ENCODE measurements at regions of chr13 and their contacts with region 1.

Region 1: GRCh38 chr13:23175920-23176319 is 4.9 kb upstream of the SGCG start:
- DNase-seq: no peak
- ATAC-seq: no peak
- H3K4me3 ChIP-seq: no peak overlapping the region
- H3K27ac ChIP-seq: no peak overlapping the region
- H3K4me1 ChIP-seq: peaks cover 11 to 14% of the 10 kb centered on the region in 2 donors
- H3K27me3 ChIP-seq: no peaks in the 10 kb centered on the region
- CTCF ChIP-seq: no peak
- POLR2A ChIP-seq: no peak

Region 2: DNA sequence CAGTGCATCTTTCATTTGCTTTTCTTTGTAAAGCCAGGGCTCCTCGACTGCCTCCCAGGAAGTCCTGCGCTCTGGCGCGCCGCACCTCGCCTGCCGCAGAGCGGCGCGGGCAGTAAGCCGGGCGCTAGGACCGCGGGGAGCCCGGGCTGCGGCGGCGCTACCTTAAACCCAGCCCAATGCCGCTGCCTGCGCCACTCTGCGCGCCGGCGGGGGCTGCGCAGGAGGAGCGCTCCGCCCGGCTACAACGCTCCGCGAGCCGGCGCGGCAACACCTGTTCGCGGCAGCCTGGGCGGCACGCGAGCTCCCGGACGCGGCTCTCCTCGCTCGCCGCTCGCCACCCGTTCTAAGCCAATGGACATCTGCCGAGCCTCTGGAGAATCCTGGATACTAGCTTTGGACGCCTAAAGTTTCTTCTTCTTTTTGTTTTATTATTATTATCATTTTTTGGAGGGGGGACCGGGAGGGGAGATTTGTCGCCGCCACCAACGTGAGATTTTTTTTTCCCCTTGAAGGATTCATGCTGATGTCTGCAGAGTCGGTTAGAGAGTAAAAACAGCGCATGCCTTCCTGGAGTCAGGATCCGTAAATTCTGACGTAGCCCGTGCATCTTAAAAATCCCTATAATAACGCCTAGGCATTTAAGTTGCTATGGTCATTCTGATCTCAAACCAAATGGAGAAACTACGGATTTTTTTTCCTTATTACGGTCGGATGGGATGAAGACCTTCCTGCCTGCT is 1504.9 kb before region 1 on chr13 and contains the start of gene FGF9:
- in situ Hi-C with region 1: no loop called
- intact Hi-C with region 1: loop called (anchors 5 kb)
- DNase-seq: peak; percentile 34 to 59
- ATAC-seq: peak; percentile 63 to 68
- H3K4me3 ChIP-seq: peak within 1 kb of the TSS; percentile 58 to 64 (median 62)
- H3K27ac ChIP-seq: peak within 1 kb of the TSS; percentile 3 to 76 (median 57)
- H3K4me1 ChIP-seq: peaks cover 24 to 36% of the 10 kb centered on the region in 2 donors
- H3K27me3 ChIP-seq: peaks cover 11 to 35% (median 29%) of the 10 kb centered on the region in 3 donors
- CTCF ChIP-seq: peak in 1 of 5 experiments; percentile 20
- POLR2A ChIP-seq: peak; percentile 79 to 90
- total RNA-seq, gene FGF9: 0.16 to 0.38 (median 0.25) TPM in 3 of 4 donors, not detected in the other

Region 3: DNA sequence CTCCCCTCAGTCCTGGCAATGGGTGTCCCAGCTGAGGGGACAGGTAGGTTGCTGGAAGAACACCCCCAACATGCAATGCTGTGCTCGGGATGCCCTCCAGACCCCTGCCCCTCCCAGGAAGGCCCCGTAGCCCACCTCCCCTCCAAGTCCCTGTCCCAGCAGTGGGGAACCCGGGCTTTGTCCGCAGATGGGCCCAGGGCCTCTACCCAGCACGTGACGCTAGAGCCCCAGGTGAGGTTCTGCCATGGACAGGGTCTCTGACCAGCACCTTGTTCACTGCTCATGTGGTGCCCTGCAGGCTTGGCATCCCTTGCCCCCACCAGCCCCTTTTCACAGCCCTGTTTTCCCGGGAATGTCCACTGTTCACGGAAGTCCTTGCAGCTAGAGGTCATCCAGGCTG is 215.1 kb before region 1 on chr13:
- in situ Hi-C with region 1: no loop called
- intact Hi-C with region 1: no loop called
- DNase-seq: no peak
- ATAC-seq: no peak
- H3K4me3 ChIP-seq: no peak overlapping the region
- H3K27ac ChIP-seq: no peak overlapping the region
- H3K4me1 ChIP-seq: no peaks in the 10 kb centered on the region
- H3K27me3 ChIP-seq: no peaks in the 10 kb centered on the region
- CTCF ChIP-seq: no peak
- POLR2A ChIP-seq: no peak

Region 4: DNA sequence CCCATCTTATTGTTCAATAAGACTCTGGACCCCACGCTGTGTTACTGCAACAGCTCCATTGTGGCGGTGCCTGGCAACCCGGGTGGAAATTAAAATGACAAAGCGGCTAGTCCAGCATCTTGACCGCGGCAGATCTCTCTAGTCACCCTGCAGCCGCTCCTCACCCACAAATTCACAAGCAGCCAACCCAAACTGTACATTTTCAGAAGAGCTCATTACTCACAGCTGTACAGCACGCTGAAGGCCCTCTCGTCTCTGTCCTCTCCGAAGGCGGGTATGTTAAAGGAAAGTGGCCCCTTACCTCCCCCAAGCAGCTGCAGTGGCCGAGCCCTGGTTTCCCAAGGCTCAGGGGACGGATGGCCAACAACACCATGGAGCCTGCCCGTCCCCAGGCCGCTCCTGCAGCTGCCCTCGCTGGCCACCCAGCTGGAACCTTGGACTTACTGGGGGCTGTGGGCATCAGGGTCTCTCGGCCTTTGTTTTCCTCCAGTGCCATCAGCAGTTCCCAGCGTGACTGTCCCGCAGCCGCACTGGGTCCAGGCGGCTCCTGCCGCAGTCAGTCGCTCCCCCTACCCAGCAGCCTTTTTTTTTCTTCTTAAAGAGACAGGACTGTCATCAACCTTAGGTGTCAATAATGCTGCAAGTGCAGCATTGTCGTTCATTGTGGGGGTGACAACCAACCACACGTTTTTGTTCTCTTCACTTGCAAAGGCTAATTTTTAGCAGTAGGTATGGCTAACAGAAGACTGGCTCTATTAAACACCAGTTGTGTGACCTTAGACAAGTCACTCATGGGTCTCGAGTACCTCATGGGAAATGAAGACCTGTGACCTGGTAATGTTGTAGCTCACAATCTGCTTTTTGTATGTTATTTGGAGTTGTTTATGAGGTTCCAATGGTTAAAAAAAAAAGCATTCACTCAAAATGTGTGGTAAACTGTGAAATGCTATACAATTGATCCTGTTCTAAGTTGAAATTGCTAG is 257.5 kb after region 1 on chr13 and contains the start of gene SACS:
- in situ Hi-C with region 1: loop called in 1 of 4 experiments (anchors 25 kb)
- intact Hi-C with region 1: no loop called
- DNase-seq: peak; percentile 28 to 48
- ATAC-seq: peak; percentile 71 to 72
- H3K4me3 ChIP-seq: peak within 1 kb of the TSS; percentile 67 to 92 (median 72)
- H3K27ac ChIP-seq: peak within 1 kb of the TSS; percentile 90 to 97 (median 95)
- H3K4me1 ChIP-seq: peaks cover 23 to 28% of the 10 kb centered on the region in 2 donors
- H3K27me3 ChIP-seq: no peaks in the 10 kb centered on the region
- CTCF ChIP-seq: no peak
- POLR2A ChIP-seq: peak; percentile 70 to 72
- total RNA-seq, gene SACS: 23.8 to 36.5 (median 31.8) TPM

Region 5: GRCh38 chr13:23488458-23488857 is 312.5 kb after region 1 on chr13:
- in situ Hi-C with region 1: no loop called
- intact Hi-C with region 1: loop called (anchors 5 kb)
- DNase-seq: peak in 1 of 2 donors; percentile 72
- ATAC-seq: peak; percentile 95 to 99
- H3K4me3 ChIP-seq: no peak overlapping the region
- H3K27ac ChIP-seq: peak overlapping the region; percentile 53 to 82 (median 63)
- H3K4me1 ChIP-seq: peaks cover 10 to 11% of the 10 kb centered on the region in 2 donors
- H3K27me3 ChIP-seq: no peaks in the 10 kb centered on the region
- CTCF ChIP-seq: no peak
- POLR2A ChIP-seq: no peak

Measured in gastrocnemius medialis (tissue), 4 donors.